ENCODE measurements at regions of chr17 and their contacts with region 1.

Region 1: GRCh38 chr17:48878918-48879898 is 13.4 kb upstream of the ATP5MC1 start:
- DNase-seq: peak; percentile 53 to 87
- H3K4me3 ChIP-seq: no peak overlapping the region
- H3K27ac ChIP-seq: no peak overlapping the region
- H3K4me1 ChIP-seq: peaks cover 0 to 7% (median 3%) of the 10 kb centered on the region in 4 donors
- H3K27me3 ChIP-seq: peaks cover 0 to 5% (median 0%) of the 10 kb centered on the region in 3 donors
- CTCF ChIP-seq: peak in 5 of 7 experiments; percentile 90 to 95 (median 94)
- EP300 ChIP-seq: no peak
- POLR2A ChIP-seq: no peak

Region 2: GRCh38 chr17:48678141-48678971 is 200.9 kb before region 1 on chr17:
- intact Hi-C with region 1: loop called (anchors 10 kb)
- DNase-seq: peak; percentile 71 to 80
- H3K4me3 ChIP-seq: peak overlapping the region in 1 of 4 donors; percentile 22
- H3K27ac ChIP-seq: no peak overlapping the region
- H3K4me1 ChIP-seq: peaks cover 5 to 8% (median 7%) of the 10 kb centered on the region in 4 donors
- H3K27me3 ChIP-seq: peaks cover 5 to 89% (median 24%) of the 10 kb centered on the region in 3 donors
- CTCF ChIP-seq: peak in 5 of 7 experiments; percentile 66 to 93 (median 92)
- EP300 ChIP-seq: no peak
- POLR2A ChIP-seq: no peak

Region 3: DNA sequence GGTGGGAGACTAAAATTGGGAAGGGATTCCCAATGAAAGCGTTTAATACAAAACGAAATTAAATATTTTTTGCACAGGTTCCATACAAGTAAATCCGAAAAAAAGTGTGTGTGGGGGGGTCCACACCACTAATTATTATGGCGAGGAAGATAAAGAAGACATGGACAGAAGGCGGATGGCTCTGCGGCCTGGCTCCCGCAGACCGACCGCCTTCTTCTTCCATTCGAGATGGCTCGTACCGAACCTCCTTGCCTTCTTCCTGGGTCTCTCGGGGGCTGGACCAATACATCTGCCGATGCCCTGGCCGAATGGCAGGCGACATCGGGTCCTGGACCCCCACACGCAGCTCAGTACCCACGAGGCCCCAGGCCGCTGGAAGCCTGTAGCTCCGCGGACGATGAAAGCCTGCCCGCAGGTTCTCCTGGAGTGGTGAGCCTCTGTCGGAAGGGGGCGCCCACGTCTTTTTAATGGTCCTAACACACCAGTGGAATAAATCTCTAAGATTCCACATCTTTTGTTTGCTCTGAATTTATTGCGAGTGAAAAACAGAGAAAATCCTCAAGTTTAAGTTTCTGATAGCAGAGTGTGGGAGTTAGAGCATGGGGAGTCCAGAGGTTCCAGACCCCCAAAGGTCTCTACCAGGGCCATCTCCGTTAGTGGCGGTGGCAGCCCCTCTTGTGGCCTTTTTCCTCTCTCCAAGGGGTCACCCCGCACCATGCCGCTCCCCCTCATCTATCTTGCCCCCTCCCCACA is 154.8 kb before region 1 on chr17:
- intact Hi-C with region 1: loop called (anchors 10 kb)
- DNase-seq: peak; percentile 89 to 93
- H3K4me3 ChIP-seq: peak overlapping the region in 1 of 4 donors; percentile 30
- H3K27ac ChIP-seq: no peak overlapping the region
- H3K4me1 ChIP-seq: peaks cover 16 to 52% (median 41%) of the 10 kb centered on the region in 4 donors
- H3K27me3 ChIP-seq: peaks cover 41 to 100% (median 100%) of the 10 kb centered on the region in 3 donors
- CTCF ChIP-seq: peak in 4 of 7 experiments; percentile 57 to 78 (median 72)
- EP300 ChIP-seq: no peak
- POLR2A ChIP-seq: no peak

Region 4: GRCh38 chr17:48790607-48791127 is 88.5 kb before region 1 on chr17:
- intact Hi-C with region 1: no loop called
- DNase-seq: no peak
- H3K4me3 ChIP-seq: no peak overlapping the region
- H3K27ac ChIP-seq: no peak overlapping the region
- H3K4me1 ChIP-seq: peaks cover 3 to 21% (median 14%) of the 10 kb centered on the region in 4 donors
- H3K27me3 ChIP-seq: peaks cover 0 to 59% (median 0%) of the 10 kb centered on the region in 3 donors
- CTCF ChIP-seq: no peak
- EP300 ChIP-seq: no peak
- POLR2A ChIP-seq: no peak

Region 5: GRCh38 chr17:48804925-48805411 is 74.2 kb before region 1 on chr17:
- intact Hi-C with region 1: loop called (anchors 2 kb)
- DNase-seq: peak; percentile 67 to 79
- H3K4me3 ChIP-seq: no peak overlapping the region
- H3K27ac ChIP-seq: no peak overlapping the region
- H3K4me1 ChIP-seq: peaks cover 9 to 43% (median 30%) of the 10 kb centered on the region in 4 donors
- H3K27me3 ChIP-seq: peaks cover 0 to 2% (median 0%) of the 10 kb centered on the region in 3 donors
- CTCF ChIP-seq: peak in 5 of 7 experiments; percentile 83 to 96 (median 91)
- EP300 ChIP-seq: no peak
- POLR2A ChIP-seq: no peak

Region 6: DNA sequence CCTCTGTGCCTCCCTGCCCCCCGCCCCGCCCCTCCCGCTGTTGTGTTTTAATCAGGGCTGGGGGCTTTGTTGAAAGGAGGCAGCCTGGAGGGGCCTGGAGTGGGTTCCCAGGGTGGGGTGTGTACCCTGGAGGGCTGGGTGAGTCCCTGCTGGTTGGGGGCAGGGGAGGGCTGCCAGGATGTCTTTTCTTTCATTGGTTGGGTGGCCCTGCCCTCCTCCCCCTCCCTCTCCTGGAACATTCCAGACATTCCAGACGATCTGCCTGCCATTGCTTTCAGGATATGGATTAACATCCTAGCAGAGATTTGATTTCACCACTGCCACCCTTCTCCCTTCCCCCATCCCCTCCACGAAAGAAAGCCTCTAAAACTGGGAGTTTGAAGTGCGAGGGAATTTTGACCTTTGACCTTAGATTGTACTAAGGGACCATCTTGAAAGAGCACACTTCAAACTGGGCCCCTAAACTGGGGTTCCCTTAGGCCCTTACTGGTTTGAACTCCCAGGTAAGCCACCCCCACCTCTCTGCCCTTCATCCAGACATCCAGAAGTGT is 143.3 kb after region 1 on chr17:
- intact Hi-C with region 1: loop called (anchors 10 kb)
- DNase-seq: peak in 1 of 2 donors; percentile 63
- H3K4me3 ChIP-seq: no peak overlapping the region
- H3K27ac ChIP-seq: no peak overlapping the region
- H3K4me1 ChIP-seq: no peaks in the 10 kb centered on the region
- H3K27me3 ChIP-seq: peaks cover 0 to 54% (median 6%) of the 10 kb centered on the region in 3 donors
- CTCF ChIP-seq: no peak
- EP300 ChIP-seq: no peak
- POLR2A ChIP-seq: no peak

Measured in stomach (tissue), 19 donors.